Naive thymus-derived CD4-positive, alpha-beta T cell (primary cell): ENCODE measurements at regions of chr2 and their contacts with region 1.

Region 1: DNA sequence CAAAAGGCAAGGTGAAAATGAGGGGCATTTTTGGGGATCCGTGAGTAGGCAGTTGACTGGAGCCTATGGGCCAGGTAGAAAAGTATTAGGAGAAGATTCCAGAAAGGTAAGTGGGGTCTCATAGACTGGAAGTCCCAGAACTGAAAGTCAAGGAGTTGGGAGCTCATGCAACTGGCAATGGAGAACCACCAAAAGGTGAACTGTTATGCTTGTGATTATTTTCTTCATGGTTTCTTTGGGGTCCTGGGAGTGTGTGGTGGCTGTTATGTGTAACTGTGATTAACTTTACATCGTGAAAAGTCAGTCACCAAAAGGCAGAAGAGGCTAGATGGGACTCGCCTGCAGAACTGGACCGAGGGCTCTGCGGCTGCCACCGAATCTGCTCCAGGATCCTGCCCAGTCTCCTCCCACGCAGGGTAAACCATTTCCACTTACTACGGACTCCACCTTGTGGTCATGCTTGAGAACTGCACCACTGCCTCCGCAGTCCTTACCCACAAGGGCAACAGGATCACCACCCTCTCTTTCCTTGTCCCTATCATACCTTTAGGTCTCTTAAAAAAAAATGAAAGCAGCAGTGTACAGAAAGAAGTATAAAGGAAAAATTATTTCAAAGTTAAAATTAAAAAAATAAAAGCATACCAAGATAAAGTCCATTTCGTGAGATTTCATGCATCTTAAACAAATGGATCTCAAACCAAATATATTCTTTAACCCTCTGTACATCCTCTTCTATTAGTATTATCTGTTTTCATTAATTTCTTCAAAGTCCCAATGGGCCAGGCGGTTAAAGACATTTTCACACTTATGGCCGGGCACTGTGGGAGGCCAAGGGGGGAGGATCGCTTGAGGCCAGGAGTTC is 15.6 kb upstream of the CEP68 start:
- DNase-seq: peak; percentile 43 to 77 (median 68)
- ATAC-seq: peak; percentile 100
- H3K4me3 ChIP-seq: no peak overlapping the region
- H3K4me3 Mint-ChIP-seq: peak overlapping the region in 6 of 10 donors; percentile 23 to 65 (median 44)
- H3K27ac ChIP-seq: no peak overlapping the region
- H3K27ac Mint-ChIP-seq: peak overlapping the region in 1 of 9 donors; percentile 34
- H3K4me1 ChIP-seq: peaks cover 0 to 3% of the 10 kb centered on the region in 2 donors
- H3K4me1 Mint-ChIP-seq: peaks cover 0 to 24% (median 12%) of the 10 kb centered on the region in 7 donors
- H3K27me3 ChIP-seq: no peaks in the 10 kb centered on the region
- H3K27me3 Mint-ChIP-seq: peaks cover 0 to 2% (median 0%) of the 10 kb centered on the region in 5 donors

Region 2: DNA sequence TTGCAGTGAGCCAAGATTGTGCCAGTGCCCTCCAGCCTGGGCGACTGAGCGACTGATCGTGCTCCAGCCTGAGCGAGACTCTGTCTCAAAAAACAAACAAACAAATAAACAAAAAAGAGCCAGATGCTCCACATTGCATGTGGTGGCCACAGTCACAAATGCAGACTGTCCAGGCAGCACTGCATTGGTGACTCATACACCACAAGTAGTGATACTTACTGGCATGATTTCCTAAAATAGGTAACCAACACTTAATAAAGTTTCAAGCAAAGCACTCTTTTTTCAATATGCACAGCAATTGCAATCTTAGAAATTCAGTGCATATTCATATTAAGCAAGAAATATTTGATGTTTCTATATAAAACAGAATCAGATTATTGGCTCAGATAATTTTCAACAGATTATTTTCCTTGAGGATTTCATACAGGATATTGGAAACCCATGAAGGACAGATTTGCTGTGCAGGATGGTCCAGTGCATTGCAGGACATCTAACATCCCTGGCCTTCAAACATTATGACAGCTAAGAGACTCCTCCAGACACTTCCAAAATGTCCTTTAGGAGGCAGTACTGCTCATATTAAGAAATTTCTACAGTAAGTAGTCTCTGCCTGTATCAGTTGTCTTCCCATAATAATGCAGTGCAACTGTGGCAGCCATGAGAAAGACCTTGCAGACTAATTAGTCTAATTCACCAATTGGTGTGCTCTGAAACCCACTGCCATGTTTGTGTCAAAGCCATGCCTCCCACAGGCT is 61.9 kb before region 1 on chr2:
- CTCF ChIA-PET with region 1: interaction called, 4 read pairs
- POLR2A ChIA-PET with region 1: no interaction called
- intact Hi-C with region 1: loop called in 1 of 2 experiments (anchors 1 kb)
- DNase-seq: peak in 3 of 9 donors; percentile 7 to 13 (median 9)
- ATAC-seq: peak; percentile 37
- H3K4me3 ChIP-seq: no peak overlapping the region
- H3K4me3 Mint-ChIP-seq: no peak overlapping the region
- H3K27ac ChIP-seq: no peak overlapping the region
- H3K27ac Mint-ChIP-seq: peak overlapping the region in 1 of 9 donors; percentile 4
- H3K4me1 ChIP-seq: no peaks in the 10 kb centered on the region
- H3K4me1 Mint-ChIP-seq: peaks cover 0 to 39% (median 0%) of the 10 kb centered on the region in 7 donors
- H3K27me3 ChIP-seq: no peaks in the 10 kb centered on the region
- H3K27me3 Mint-ChIP-seq: peaks cover 0 to 12% (median 0%) of the 10 kb centered on the region in 5 donors

Region 3: GRCh38 chr2:65017335-65017734 is 23.3 kb before region 1 on chr2:
- CTCF ChIA-PET with region 1: no interaction called
- POLR2A ChIA-PET with region 1: no interaction called
- intact Hi-C with region 1: loop called in 1 of 2 experiments (anchors 1 kb)
- DNase-seq: no peak
- ATAC-seq: peak; percentile 64
- H3K4me3 ChIP-seq: no peak overlapping the region
- H3K4me3 Mint-ChIP-seq: no peak overlapping the region
- H3K27ac ChIP-seq: no peak overlapping the region
- H3K27ac Mint-ChIP-seq: no peak overlapping the region
- H3K4me1 ChIP-seq: no peaks in the 10 kb centered on the region
- H3K4me1 Mint-ChIP-seq: peaks cover 0 to 24% (median 10%) of the 10 kb centered on the region in 7 donors
- H3K27me3 ChIP-seq: no peaks in the 10 kb centered on the region
- H3K27me3 Mint-ChIP-seq: no peaks in the 10 kb centered on the region

Region 4: GRCh38 chr2:65159906-65160305 is 119.3 kb after region 1 on chr2:
- CTCF ChIA-PET with region 1: no interaction called
- POLR2A ChIA-PET with region 1: no interaction called
- intact Hi-C with region 1: no loop called
- DNase-seq: no peak
- ATAC-seq: peak; percentile 32
- H3K4me3 ChIP-seq: no peak overlapping the region
- H3K4me3 Mint-ChIP-seq: peak overlapping the region in 8 of 10 donors; percentile 3 to 44 (median 19)
- H3K27ac ChIP-seq: no peak overlapping the region
- H3K27ac Mint-ChIP-seq: peak overlapping the region in 4 of 9 donors; percentile 1 to 6 (median 2)
- H3K4me1 ChIP-seq: peaks cover 0 to 5% of the 10 kb centered on the region in 2 donors
- H3K4me1 Mint-ChIP-seq: peaks cover 18 to 33% (median 25%) of the 10 kb centered on the region in 7 donors
- H3K27me3 ChIP-seq: no peaks in the 10 kb centered on the region
- H3K27me3 Mint-ChIP-seq: peaks cover 0 to 2% (median 0%) of the 10 kb centered on the region in 5 donors